ENCODE measurements at regions of chr14 and their contacts with region 1.

Region 1: GRCh38 chr14:33569821-33570687 is 380.8 kb downstream of the EGLN3 start:
- DNase-seq: no peak
- ATAC-seq: no peak
- H3K4me3 ChIP-seq: no peak overlapping the region
- H3K27ac ChIP-seq: no peak overlapping the region
- H3K4me1 ChIP-seq: no peaks in the 10 kb centered on the region
- H3K27me3 ChIP-seq: no peaks in the 10 kb centered on the region
- CTCF ChIP-seq: no peak
- EP300 ChIP-seq: no peak
- POLR2A ChIP-seq: no peak
- RAD21 ChIP-seq: no peak

Region 2: DNA sequence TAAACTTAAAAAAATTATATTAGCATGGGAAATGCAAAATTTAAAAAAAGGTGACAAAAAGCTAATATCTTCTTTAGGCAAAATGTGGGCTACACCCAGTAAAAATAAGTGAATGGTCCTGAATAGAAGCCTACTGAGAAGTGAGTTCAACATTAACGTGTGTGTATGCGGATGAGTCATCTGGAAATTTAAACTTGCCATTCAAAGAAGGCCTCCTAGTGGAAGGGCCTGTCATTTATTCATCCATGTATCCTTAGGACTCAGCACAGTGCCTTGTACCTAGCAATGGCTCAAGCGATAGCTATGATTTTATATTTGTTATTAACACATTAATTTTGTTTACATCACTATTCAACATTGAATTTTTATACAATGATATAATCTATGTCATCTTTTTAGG is 1782.7 kb before region 1 on chr14:
- CTCF ChIA-PET with region 1: no interaction called
- POLR2A ChIA-PET with region 1: no interaction called
- RAD21 ChIA-PET with region 1: no interaction called
- SMC1A ChIA-PET with region 1: no interaction called
- in situ Hi-C with region 1: no loop called
- intact Hi-C with region 1: no loop called
- DNase-seq: no peak
- ATAC-seq: no peak
- H3K4me3 ChIP-seq: no peak overlapping the region
- H3K27ac ChIP-seq: no peak overlapping the region
- H3K4me1 ChIP-seq: no peaks in the 10 kb centered on the region
- H3K27me3 ChIP-seq: no peaks in the 10 kb centered on the region
- CTCF ChIP-seq: no peak
- EP300 ChIP-seq: no peak
- POLR2A ChIP-seq: no peak
- RAD21 ChIP-seq: no peak

Region 3: DNA sequence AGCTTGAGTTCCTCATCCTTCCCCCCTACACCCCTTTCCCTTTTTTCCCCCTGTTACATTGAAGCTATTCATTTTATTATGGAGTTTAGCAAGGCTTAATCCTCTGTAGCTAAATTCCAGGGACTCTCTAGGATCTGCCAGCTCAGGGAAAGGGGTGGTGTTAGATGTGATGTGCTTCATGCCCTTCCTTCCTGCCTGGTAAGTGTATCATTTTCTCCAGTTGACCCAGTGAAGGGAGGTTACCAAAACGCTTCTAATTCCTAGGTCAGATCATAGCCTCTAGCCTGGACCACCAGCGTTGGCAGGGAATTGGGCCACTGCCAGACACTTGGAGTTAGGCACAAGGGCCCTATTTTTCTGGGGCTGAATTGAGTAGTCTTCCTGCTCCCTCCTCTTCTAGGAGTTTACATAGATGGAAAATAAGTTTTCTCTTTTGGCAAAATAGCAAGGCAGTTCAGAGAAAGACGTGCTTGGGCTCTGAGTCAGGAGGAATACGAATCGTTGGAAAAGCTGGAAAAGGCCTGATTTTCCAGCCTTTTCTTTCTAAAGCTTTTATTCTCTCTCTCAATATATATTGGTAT is 543.1 kb before region 1 on chr14:
- CTCF ChIA-PET with region 1: no interaction called
- POLR2A ChIA-PET with region 1: no interaction called
- RAD21 ChIA-PET with region 1: no interaction called
- SMC1A ChIA-PET with region 1: no interaction called
- in situ Hi-C with region 1: no loop called
- intact Hi-C with region 1: no loop called
- DNase-seq: no peak
- ATAC-seq: no peak
- H3K4me3 ChIP-seq: no peak overlapping the region
- H3K27ac ChIP-seq: no peak overlapping the region
- H3K4me1 ChIP-seq: no peaks in the 10 kb centered on the region
- H3K27me3 ChIP-seq: no peaks in the 10 kb centered on the region
- CTCF ChIP-seq: no peak
- EP300 ChIP-seq: no peak
- POLR2A ChIP-seq: no peak
- RAD21 ChIP-seq: no peak

Region 4: GRCh38 chr14:33534632-33535031 is 35.4 kb before region 1 on chr14:
- CTCF ChIA-PET with region 1: interaction called, 36 read pairs
- POLR2A ChIA-PET with region 1: interaction called, 105 read pairs
- RAD21 ChIA-PET with region 1: interaction called, 279 read pairs
- SMC1A ChIA-PET with region 1: interaction called, 271 read pairs
- in situ Hi-C with region 1: no loop called
- intact Hi-C with region 1: no loop called
- DNase-seq: no peak
- ATAC-seq: no peak
- H3K4me3 ChIP-seq: no peak overlapping the region
- H3K27ac ChIP-seq: no peak overlapping the region
- H3K4me1 ChIP-seq: no peaks in the 10 kb centered on the region
- H3K27me3 ChIP-seq: no peaks in the 10 kb centered on the region
- CTCF ChIP-seq: no peak
- EP300 ChIP-seq: no peak
- POLR2A ChIP-seq: no peak
- RAD21 ChIP-seq: no peak

Region 5: DNA sequence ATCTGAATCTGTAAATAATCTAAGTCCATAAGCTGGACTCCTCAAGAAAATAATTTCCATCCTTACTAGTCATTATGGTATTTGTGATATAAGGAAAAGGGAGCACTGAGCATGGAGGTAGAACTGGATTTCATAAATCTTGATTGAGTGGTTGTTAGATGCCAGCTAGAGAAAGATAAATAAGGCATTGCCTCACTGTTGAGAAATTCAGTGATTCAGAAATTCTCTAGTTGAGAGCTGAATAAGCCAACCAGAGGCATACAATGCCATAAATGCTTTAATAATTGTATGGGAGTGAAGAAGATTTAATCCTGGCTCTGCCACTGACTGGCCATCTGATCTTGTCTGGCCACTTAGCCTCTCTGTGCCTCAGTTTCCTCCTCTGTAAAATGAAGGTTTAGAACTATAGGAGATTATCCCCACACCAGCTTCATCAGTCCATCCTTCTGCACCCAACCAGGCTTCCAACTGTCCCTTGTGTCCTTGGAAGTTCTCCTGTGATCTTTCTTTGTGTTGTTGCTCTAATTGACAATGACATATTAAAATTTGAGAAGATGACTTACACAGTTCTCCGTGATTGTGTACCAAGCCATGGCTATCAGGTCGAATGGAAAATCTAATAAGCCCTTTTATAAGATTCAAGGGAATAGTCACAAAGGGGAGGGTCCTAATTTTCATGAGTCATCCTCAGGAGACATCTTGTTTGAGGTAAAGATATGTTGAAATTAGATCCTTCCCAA is 13.5 kb before region 1 on chr14:
- CTCF ChIA-PET with region 1: interaction called, 50 read pairs
- POLR2A ChIA-PET with region 1: interaction called, 81 read pairs
- RAD21 ChIA-PET with region 1: interaction called, 176 read pairs
- SMC1A ChIA-PET with region 1: interaction called, 176 read pairs
- in situ Hi-C with region 1: no loop called
- intact Hi-C with region 1: no loop called
- DNase-seq: no peak
- ATAC-seq: no peak
- H3K4me3 ChIP-seq: no peak overlapping the region
- H3K27ac ChIP-seq: no peak overlapping the region
- H3K4me1 ChIP-seq: no peaks in the 10 kb centered on the region
- H3K27me3 ChIP-seq: peaks cover 0 to 3% of the 10 kb centered on the region in 2 experiments; a peak in 1 of 4 replicates
- CTCF ChIP-seq: no peak
- EP300 ChIP-seq: no peak
- POLR2A ChIP-seq: no peak
- RAD21 ChIP-seq: no peak

Region 6: DNA sequence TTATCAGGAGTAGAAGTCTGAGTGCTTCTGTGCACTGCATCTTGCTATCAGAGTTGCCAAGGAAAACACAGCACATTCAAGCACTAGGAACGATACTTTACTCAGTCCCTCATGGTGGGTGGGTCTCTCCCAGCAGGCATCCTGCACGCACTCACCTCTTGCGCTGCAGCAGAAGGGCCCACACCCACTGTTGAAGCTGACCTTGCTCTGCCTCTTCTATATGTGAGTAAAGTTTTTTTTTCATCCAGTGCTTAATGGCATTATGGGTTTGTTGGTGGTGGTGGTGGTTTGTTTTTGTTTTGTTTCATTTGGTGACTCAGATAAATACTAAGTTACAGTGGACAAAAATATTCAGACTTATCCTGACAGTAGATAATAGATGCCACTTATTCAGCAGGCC is 32.3 kb after region 1 on chr14:
- CTCF ChIA-PET with region 1: interaction called, 11 read pairs
- POLR2A ChIA-PET with region 1: interaction called, 15 read pairs
- RAD21 ChIA-PET with region 1: interaction called, 44 read pairs
- SMC1A ChIA-PET with region 1: interaction called, 103 read pairs
- in situ Hi-C with region 1: no loop called
- intact Hi-C with region 1: no loop called
- DNase-seq: no peak
- ATAC-seq: no peak
- H3K4me3 ChIP-seq: no peak overlapping the region
- H3K27ac ChIP-seq: no peak overlapping the region
- H3K4me1 ChIP-seq: no peaks in the 10 kb centered on the region
- H3K27me3 ChIP-seq: no peaks in the 10 kb centered on the region
- CTCF ChIP-seq: no peak
- EP300 ChIP-seq: no peak
- POLR2A ChIP-seq: no peak
- RAD21 ChIP-seq: no peak

Region 7: DNA sequence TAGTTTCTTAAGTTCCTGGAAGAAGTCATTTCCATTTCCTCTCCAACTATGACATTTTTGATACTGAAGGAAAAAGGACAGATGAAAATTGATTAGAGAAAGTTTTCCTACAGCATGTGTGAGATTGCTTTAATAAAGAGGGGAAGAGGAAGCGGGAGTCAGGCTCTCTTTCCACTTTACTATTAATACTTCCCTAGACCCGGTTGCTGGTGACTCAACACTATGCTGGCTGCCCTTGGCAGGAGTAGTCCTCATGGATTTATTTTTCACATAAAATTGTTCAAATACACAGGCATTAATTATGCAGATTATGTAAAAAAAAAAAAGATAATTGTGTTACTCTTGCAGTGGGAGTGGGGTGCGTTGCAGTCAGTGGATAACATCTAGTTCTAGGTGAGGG is 87.4 kb after region 1 on chr14:
- CTCF ChIA-PET with region 1: interaction called, 3 read pairs
- POLR2A ChIA-PET with region 1: interaction called, 3 read pairs
- RAD21 ChIA-PET with region 1: interaction called, 17 read pairs
- SMC1A ChIA-PET with region 1: interaction called, 16 read pairs
- in situ Hi-C with region 1: no loop called
- intact Hi-C with region 1: no loop called
- DNase-seq: no peak
- ATAC-seq: no peak
- H3K4me3 ChIP-seq: no peak overlapping the region
- H3K27ac ChIP-seq: no peak overlapping the region
- H3K4me1 ChIP-seq: no peaks in the 10 kb centered on the region
- H3K27me3 ChIP-seq: no peaks in the 10 kb centered on the region
- CTCF ChIP-seq: no peak
- EP300 ChIP-seq: no peak
- POLR2A ChIP-seq: no peak
- RAD21 ChIP-seq: no peak

Region 8: GRCh38 chr14:33810308-33810707 is 240.3 kb after region 1 on chr14:
- CTCF ChIA-PET with region 1: no interaction called
- POLR2A ChIA-PET with region 1: no interaction called
- RAD21 ChIA-PET with region 1: no interaction called
- SMC1A ChIA-PET with region 1: no interaction called
- in situ Hi-C with region 1: no loop called
- intact Hi-C with region 1: no loop called
- DNase-seq: no peak
- ATAC-seq: no peak
- H3K4me3 ChIP-seq: no peak overlapping the region
- H3K27ac ChIP-seq: no peak overlapping the region
- H3K4me1 ChIP-seq: no peaks in the 10 kb centered on the region
- H3K27me3 ChIP-seq: peaks cover 0 to 3% of the 10 kb centered on the region in 2 experiments; a peak in 1 of 4 replicates
- CTCF ChIP-seq: no peak
- EP300 ChIP-seq: no peak
- POLR2A ChIP-seq: no peak
- RAD21 ChIP-seq: no peak